ENCODE measurements at regions of chr18 and their contacts with region 1.

Region 1: GRCh38 chr18:158128-159036 is at the start of gene USP14:
- DNase-seq: peak; percentile 99
- ATAC-seq: peak; percentile 95
- H3K4me3 Mint-ChIP-seq: peak within 1 kb of the TSS; percentile 88
- H3K27ac Mint-ChIP-seq: peak within 1 kb of the TSS; percentile 92
- H3K4me1 Mint-ChIP-seq: peaks cover 35% of the 10 kb centered on the region
- H3K27me3 Mint-ChIP-seq: no peaks in the 10 kb centered on the region
- total RNA-seq, gene USP14: 71.9 to 82.7 TPM

Region 2: DNA sequence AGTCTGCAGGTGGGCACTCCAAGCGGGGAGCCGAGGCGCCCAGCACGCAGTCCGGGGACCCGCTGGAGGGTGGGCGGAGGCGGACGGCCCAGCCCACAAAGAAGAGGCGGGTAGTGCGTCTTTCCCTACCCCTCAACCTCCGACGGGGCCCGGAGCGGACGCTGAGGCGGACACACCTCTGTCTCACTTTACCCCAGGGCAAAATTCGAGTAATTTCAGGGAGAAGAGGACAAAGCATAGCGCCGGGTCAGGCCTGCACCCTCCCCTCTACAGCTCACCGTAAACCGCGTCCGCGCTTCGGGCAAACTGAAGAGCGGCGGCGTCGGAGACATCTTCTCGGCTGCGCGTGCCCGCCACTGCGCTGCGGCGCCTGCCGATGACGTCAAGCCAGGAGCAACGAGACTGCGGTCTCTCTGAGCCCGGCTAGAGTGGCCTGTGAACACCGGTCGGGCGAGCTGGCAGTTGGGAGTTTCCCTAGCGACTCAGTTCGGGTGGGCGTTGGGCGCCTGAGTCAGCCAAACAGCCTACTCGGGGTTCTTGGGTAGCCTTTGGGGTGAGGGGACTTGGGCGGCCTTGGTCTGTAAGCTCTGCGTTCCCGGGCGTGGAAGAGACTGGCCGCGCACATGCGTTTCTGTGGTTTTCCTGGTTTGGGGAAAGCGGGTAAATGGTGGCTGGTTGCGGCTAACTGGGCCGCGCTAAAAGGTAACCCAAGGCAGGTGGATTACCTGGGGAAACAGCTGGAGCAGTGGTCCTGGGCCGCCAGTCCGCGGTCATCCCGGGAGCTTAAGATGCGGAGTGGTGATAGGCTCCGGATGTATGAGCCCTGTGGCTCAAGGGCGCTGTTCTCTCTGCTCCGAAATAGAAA is 109.5 kb after region 1 on chr18 and contains the start of gene THOC1:
- CTCF ChIA-PET with region 1: interaction called, 5 read pairs
- POLR2A ChIA-PET with region 1: interaction called, 22 read pairs
- DNase-seq: peak; percentile 96
- ATAC-seq: peak; percentile 92
- H3K4me3 Mint-ChIP-seq: peak within 1 kb of the TSS; percentile 99
- H3K27ac Mint-ChIP-seq: peak within 1 kb of the TSS; percentile 100
- H3K4me1 Mint-ChIP-seq: peaks cover 26% of the 10 kb centered on the region
- H3K27me3 Mint-ChIP-seq: no peaks in the 10 kb centered on the region
- total RNA-seq, gene THOC1: 43.6 to 49.4 TPM

Region 3: GRCh38 chr18:446941-447560 is 288.7 kb after region 1 on chr18:
- CTCF ChIA-PET with region 1: no interaction called
- POLR2A ChIA-PET with region 1: no interaction called
- DNase-seq: no peak
- ATAC-seq: no peak
- H3K4me3 Mint-ChIP-seq: no peak overlapping the region
- H3K27ac Mint-ChIP-seq: no peak overlapping the region
- H3K4me1 Mint-ChIP-seq: no peaks in the 10 kb centered on the region
- H3K27me3 Mint-ChIP-seq: no peaks in the 10 kb centered on the region

Measured in activated CD8-positive, alpha-beta T cell treated with anti-CD3 and anti-CD28 coated beads, Interleukin-2, amount 10 ng/mL, durations not matched to agents 7 days and 5 days (primary cell).